ENCODE measurements at regions of chr5 and their contacts with region 1.

Region 1: DNA sequence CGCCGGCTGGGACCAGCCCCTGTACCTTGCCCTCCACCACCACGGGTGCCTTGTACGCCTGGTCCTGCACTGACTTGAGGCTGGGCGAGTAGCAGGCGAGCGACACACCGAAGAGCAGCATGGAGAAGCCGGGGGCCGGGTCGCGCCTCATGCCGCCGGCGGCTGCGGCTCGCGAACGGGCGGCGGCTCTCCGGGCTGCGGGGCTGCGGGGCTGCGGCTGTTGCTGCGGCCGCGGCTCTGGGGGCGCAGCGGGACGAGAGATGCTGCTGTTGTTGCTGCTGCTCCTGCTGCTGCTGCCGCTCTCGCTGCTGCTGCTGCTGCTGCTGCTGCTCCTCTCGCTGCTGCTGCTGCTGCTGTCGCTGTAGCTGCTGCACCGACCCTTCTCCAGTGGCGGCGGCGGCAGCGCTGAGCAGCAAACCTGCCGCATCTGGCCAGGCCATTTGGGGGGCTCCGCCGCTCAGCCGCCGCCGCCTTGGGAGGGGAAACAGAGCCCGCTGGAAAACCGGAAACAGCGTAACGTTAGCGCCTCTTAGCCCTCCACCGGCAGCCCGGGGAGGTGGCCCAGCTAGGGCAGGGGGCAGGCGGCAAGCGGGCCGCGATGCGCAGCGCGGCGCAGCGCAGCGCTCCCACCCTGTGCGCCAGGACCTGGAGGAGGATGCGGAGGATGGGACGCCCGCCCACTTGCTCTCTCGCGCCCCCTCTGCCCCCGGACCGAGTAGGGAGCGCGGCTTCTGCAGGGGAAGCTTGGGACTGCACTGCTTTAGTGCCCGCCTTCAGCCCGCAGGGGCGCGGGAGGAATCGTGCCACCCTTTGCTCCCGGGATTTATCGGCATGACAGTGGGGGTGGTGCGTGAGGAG is at the start of gene NRG2:
- DNase-seq: peak; percentile 59 to 93 (median 86)

Region 2: GRCh38 chr5:139968547-139969261 is 74.2 kb before region 1 on chr5:
- intact Hi-C with region 1: loop called (anchors 5 kb)
- DNase-seq: peak; percentile 84 to 96 (median 91)

Region 3: DNA sequence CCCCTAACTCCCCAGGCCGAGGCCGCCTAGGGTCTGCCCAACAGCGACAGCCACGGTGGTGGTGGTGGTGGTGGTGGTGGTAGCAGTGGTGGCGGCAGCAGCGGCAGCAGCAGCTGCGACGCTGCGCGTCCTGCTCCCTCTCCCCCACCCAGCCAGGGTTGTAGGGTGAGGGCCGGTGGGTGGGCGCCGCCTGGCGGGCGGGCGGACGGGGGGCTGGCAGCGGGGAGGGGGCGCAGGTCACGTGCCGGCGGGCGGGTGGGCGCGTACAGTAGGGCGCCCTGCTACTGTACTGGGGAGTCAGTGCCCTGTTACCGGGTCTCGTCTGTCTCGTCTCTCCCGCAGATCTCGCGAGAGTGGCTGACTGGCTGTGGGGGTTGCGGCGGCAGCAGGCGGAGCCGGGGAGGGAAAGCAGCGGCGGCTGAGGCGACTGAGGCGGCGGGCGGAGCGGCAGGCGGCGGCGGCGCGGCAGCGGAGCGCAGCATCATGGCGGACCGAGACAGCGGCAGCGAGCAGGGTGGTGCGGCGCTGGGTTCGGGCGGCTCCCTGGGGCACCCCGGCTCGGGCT is 70.9 kb after region 1 on chr5 and contains the start of gene PURA:
- intact Hi-C with region 1: loop called (anchors 5 kb)
- DNase-seq: peak; percentile 81 to 96 (median 91)

Region 4: DNA sequence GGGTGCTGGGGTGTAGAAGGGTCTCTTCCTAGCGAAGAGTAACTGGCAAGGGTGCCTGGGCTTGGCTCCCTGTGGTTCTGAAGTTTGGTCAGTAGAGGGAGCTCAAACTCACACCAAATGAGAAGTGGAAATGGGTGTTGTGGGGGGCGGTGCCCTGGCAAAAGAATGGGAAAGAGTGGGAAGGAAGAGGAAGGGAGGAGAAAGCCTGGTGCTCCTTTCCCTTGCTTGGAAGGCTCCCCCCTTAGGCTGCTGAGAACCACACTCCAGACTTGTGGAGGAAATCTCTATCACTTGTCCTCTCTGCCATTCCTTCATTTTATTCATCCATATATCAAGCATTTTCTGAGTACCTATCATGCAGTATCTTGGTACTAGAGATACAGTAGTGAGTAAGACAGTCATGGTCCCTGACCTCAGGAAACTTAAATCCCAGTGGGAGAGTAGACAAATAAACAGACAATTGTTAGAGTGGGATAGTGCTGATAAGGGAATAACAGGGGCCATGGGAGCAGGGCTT is 330.2 kb after region 1 on chr5:
- intact Hi-C with region 1: no loop called
- DNase-seq: peak; percentile 33 to 87 (median 72)

Measured in head of caudate nucleus (tissue), 42 donors.